Sigmoid colon (tissue), 7 donors: ENCODE measurements at regions of chr1 and their contacts with region 1.

Region 1: DNA sequence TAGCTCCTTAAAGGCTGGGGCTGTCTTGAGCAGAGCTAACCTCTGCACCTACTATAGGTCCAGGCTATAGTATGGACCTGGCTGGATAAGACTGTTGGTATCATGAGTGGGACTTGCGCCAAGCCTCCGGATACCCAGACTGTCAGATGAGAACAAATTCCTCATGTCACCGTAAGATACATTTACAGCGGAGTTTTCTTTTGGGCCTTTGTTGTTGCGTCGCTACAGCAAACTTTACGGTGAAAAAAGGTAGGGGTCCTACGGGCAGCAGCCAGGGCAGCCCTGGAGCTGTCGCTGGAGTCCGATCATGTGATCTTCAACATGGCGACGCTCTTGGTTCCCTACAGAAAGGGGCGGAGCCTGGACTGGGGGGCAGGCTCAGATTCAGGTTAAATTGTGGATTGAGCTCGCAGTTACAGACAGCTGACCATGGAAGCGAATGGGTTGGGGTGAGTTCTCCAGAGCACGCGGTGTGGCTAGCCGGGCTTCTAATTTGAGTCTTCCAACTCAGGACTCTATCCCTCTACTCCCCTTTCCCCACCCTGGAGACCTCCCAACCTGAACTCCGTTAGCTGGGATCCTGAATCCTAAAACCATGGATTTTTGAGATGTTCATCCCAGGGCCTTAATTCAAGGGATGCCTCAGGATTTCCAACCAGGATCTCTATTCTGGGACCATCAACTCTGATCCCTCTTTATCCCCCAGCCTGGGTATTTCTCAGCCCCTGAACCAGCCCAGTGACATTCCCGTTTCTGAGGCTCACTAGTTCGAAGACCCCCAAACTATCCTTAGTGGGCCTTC is at the start of gene UROD:
- DNase-seq: peak; percentile 96
- H3K4me3 ChIP-seq: peak within 1 kb of the TSS; percentile 65 to 100 (median 82)
- H3K27ac ChIP-seq: peak within 1 kb of the TSS; percentile 78 to 94 (median 85)
- H3K4me1 ChIP-seq: peaks cover 3 to 54% (median 50%) of the 10 kb centered on the region in 4 donors
- H3K27me3 ChIP-seq: no peaks in the 10 kb centered on the region
- CTCF ChIP-seq: no peak
- EP300 ChIP-seq: peak in 1 of 4 donors; percentile 34
- POLR2A ChIP-seq: peak in 1 of 2 donors; percentile 13
- total RNA-seq, gene UROD: 65.6 to 99.2 (median 89.1) TPM

Region 2: GRCh38 chr1:44786138-44786840 is 225.7 kb before region 1 on chr1:
- intact Hi-C with region 1: loop called (anchors 5 kb)
- DNase-seq: peak; percentile 87
- H3K4me3 ChIP-seq: peak overlapping the region; percentile 34 to 61 (median 50)
- H3K27ac ChIP-seq: peak overlapping the region; percentile 41 to 70 (median 64)
- H3K4me1 ChIP-seq: peaks cover 0 to 34% (median 25%) of the 10 kb centered on the region in 4 donors
- H3K27me3 ChIP-seq: no peaks in the 10 kb centered on the region
- CTCF ChIP-seq: peak; percentile 96 to 100 (median 98)
- EP300 ChIP-seq: no peak
- POLR2A ChIP-seq: no peak

Region 3: DNA sequence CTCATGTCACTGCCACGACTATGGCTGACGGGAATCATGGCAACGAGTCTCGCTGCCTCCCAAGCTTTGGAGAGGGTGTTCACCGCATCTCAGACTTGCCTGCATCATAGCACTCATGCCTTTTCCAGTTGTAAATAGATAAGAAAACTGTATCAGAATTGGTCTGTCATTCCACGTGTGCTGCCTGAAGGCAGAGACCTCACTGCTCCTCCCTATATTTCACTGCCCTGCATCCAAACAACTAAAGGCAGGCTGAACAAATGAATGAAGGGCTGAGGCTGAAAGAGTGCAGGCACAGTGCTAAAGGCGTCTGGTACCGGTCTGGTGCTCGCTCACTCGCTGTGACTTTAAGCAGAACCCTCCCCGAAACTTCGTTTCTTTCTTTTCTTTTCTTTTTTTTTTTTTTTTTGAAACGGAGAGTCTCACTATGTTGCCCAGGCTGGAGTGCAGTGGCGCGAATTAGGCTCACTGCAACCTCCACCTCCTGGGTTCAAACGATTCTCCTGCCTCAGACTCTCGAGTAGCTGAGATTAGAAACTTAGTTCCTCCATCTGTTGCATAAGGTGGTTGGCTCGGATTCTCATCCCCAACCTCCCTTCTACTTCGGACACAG is 26.2 kb before region 1 on chr1:
- intact Hi-C with region 1: loop called (anchors 2 kb)
- DNase-seq: no peak
- H3K4me3 ChIP-seq: peak overlapping the region; percentile 61 to 82 (median 64)
- H3K27ac ChIP-seq: peak overlapping the region; percentile 68 to 78 (median 72)
- H3K4me1 ChIP-seq: peaks cover 0 to 25% (median 17%) of the 10 kb centered on the region in 4 donors
- H3K27me3 ChIP-seq: no peaks in the 10 kb centered on the region
- CTCF ChIP-seq: no peak
- EP300 ChIP-seq: no peak
- POLR2A ChIP-seq: no peak

Region 4: GRCh38 chr1:45303582-45304310 is 291.7 kb after region 1 on chr1:
- intact Hi-C with region 1: loop called (anchors 1 kb)
- DNase-seq: peak; percentile 99
- H3K4me3 ChIP-seq: peak overlapping the region; percentile 52 to 88 (median 72)
- H3K27ac ChIP-seq: peak overlapping the region; percentile 91 to 96 (median 92)
- H3K4me1 ChIP-seq: peaks cover 0 to 17% (median 11%) of the 10 kb centered on the region in 4 donors
- H3K27me3 ChIP-seq: no peaks in the 10 kb centered on the region
- CTCF ChIP-seq: peak; percentile 46 to 87 (median 70)
- EP300 ChIP-seq: no peak
- POLR2A ChIP-seq: peak in 1 of 2 donors; percentile 58

Region 5: GRCh38 chr1:45490626-45491486 is 478.8 kb after region 1 on chr1 and contains the start of gene TESK2:
- intact Hi-C with region 1: loop called (anchors 2 kb)
- DNase-seq: peak; percentile 99
- H3K4me3 ChIP-seq: peak within 1 kb of the TSS; percentile 84 to 95 (median 90)
- H3K27ac ChIP-seq: peak within 1 kb of the TSS; percentile 85 to 89 (median 87)
- H3K4me1 ChIP-seq: peaks cover 0 to 13% (median 10%) of the 10 kb centered on the region in 4 donors
- H3K27me3 ChIP-seq: no peaks in the 10 kb centered on the region
- CTCF ChIP-seq: peak in 2 of 4 experiments; percentile 15 to 29
- EP300 ChIP-seq: no peak
- POLR2A ChIP-seq: peak; percentile 55 to 92
- total RNA-seq, gene TESK2: 4.3 to 7.8 (median 7.0) TPM

Region 6: GRCh38 chr1:45686317-45687013 is 674.4 kb after region 1 on chr1 and contains the start of gene GPBP1L1:
- intact Hi-C with region 1: loop called (anchors 5 kb)
- DNase-seq: peak; percentile 99
- H3K4me3 ChIP-seq: peak within 1 kb of the TSS; percentile 63 to 96 (median 81)
- H3K27ac ChIP-seq: peak within 1 kb of the TSS; percentile 97 to 99 (median 98)
- H3K4me1 ChIP-seq: peaks cover 0 to 61% (median 49%) of the 10 kb centered on the region in 4 donors
- H3K27me3 ChIP-seq: no peaks in the 10 kb centered on the region
- CTCF ChIP-seq: no peak
- EP300 ChIP-seq: peak in 1 of 4 donors; percentile 2
- POLR2A ChIP-seq: peak; percentile 69 to 80
- total RNA-seq, gene GPBP1L1: 94.5 to 142 (median 130) TPM